ENCODE measurements at regions of chr2 and their contacts with region 1.

Region 1: GRCh38 chr2:216188956-216189355 is 79.8 kb downstream of the XRCC5 start:
- DNase-seq: no peak
- ATAC-seq: no peak
- H3K4me3 Mint-ChIP-seq: no peak overlapping the region
- H3K27ac Mint-ChIP-seq: no peak overlapping the region
- H3K4me1 Mint-ChIP-seq: peaks cover 50% of the 10 kb centered on the region
- H3K27me3 Mint-ChIP-seq: no peaks in the 10 kb centered on the region
- CTCF ChIP-seq: no peak

Region 2: DNA sequence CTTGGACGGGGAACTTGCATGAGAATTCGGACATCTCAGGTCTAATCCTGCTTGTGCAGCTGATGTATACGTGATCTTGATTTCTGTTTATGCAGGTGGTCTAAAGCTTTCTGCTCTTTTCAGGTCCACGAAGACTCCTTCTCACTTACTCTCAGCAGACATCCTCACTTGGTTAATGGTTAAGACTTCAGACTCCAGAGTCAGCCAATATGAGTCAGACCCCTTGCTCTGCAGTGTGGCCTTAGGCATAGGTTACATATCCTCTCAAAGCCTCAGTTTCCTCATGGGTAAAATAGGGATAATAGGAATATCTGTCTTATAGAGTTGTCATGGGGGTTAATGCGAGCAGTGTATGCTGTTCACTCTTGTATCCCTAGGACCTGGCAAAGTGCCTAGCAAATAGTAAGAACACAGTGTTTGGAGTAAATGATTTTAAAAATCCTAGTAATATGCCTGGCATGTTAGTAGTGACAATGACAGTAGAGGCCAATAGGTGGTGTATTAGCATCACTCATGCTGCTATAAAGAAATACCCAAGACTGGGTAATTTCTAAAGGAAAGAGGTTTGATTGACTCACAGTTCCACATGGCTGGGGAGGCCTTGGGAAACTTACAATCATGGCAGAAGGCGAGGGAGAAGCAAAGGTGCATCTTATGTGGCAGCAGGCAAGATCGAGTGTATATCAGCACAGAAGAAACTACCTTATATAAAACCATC is 37.5 kb before region 1 on chr2:
- CTCF ChIA-PET with region 1: no interaction called
- POLR2A ChIA-PET with region 1: no interaction called
- intact Hi-C with region 1: no loop called
- DNase-seq: no peak
- ATAC-seq: no peak
- H3K4me3 Mint-ChIP-seq: no peak overlapping the region
- H3K27ac Mint-ChIP-seq: no peak overlapping the region
- H3K4me1 Mint-ChIP-seq: no peaks in the 10 kb centered on the region
- H3K27me3 Mint-ChIP-seq: no peaks in the 10 kb centered on the region
- CTCF ChIP-seq: no peak

Region 3: DNA sequence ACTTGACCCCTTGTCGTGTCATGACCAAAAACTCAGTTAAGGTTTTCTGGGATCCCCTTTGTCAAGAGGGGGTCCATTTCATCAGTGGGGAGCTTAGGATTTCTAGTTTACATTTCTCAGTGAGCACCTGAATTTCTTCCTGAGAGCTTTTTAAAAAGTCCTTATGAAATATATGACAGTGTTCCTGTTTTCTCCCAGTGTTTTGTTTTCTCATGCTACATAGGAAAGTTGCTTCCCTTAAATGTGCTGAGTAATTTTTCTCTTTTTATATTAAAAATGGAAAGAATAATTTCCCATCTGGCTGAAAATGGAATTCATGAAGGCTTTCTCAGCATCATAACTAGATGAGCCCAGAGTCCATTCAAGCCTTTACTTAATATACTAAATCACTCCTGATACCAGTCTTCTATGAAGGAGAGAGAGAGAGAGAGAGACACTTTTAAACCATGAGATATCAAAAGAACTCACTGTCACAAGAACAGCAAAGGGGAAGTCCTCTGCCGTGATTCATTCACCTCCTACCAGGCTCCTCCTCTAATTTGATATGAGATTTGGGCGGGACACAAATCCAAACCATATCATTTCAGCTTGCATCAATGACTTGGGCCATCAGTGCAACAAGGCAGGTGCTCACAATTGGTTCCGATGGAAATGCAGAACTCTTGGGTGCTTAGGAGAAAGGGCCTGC is 18.7 kb before region 1 on chr2:
- CTCF ChIA-PET with region 1: interaction called, 6 read pairs
- POLR2A ChIA-PET with region 1: no interaction called
- intact Hi-C with region 1: loop called (anchors 2 kb)
- DNase-seq: no peak
- ATAC-seq: peak; percentile 14
- H3K4me3 Mint-ChIP-seq: no peak overlapping the region
- H3K27ac Mint-ChIP-seq: peak overlapping the region; percentile 35
- H3K4me1 Mint-ChIP-seq: no peaks in the 10 kb centered on the region
- H3K27me3 Mint-ChIP-seq: no peaks in the 10 kb centered on the region
- CTCF ChIP-seq: no peak

Region 4: DNA sequence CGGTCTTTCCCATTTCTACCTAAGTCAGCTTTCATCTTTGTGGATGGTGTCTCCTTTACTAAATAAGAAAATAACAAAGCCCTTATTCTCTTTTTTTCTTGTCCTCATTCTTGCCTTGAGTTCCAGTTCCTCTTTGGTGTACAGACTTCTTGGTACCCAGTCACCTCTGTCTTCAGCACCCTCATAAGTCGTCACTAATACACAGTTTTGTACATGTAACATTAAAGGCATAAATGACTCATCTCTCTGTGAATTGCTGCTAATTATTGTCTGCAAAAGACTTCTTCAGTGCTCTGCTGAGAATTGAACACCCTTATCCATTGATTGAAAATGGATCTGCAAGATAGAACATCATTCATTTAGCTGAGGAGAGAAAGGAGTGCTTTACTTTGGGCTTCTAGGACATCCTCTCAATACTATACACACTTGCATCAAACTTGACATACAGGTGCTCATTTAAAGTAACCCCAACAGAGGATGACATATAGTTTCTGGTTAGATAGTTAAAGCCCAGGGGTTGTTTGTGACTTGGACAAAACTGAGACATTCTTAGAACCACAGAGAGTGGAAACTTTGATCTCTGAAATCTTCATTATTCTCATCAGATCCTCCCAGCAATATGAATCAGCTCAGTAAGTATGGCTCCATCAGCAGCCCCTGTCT is 17.2 kb after region 1 on chr2:
- CTCF ChIA-PET with region 1: no interaction called
- POLR2A ChIA-PET with region 1: no interaction called
- intact Hi-C with region 1: loop called (anchors 1 kb)
- DNase-seq: no peak
- ATAC-seq: peak; percentile 78
- H3K4me3 Mint-ChIP-seq: no peak overlapping the region
- H3K27ac Mint-ChIP-seq: peak overlapping the region; percentile 50
- H3K4me1 Mint-ChIP-seq: peaks cover 21% of the 10 kb centered on the region
- H3K27me3 Mint-ChIP-seq: no peaks in the 10 kb centered on the region
- CTCF ChIP-seq: no peak

Region 5: GRCh38 chr2:216562696-216563435 is 373.9 kb after region 1 on chr2:
- CTCF ChIA-PET with region 1: no interaction called
- POLR2A ChIA-PET with region 1: no interaction called
- intact Hi-C with region 1: no loop called
- DNase-seq: no peak
- ATAC-seq: no peak
- H3K4me3 Mint-ChIP-seq: no peak overlapping the region
- H3K27ac Mint-ChIP-seq: no peak overlapping the region
- H3K4me1 Mint-ChIP-seq: no peaks in the 10 kb centered on the region
- H3K27me3 Mint-ChIP-seq: peaks cover 22% of the 10 kb centered on the region
- CTCF ChIP-seq: no peak

Region 6: GRCh38 chr2:216888907-216889622 is 700.1 kb after region 1 on chr2:
- CTCF ChIA-PET with region 1: no interaction called
- POLR2A ChIA-PET with region 1: no interaction called
- intact Hi-C with region 1: no loop called
- DNase-seq: no peak
- ATAC-seq: no peak
- H3K4me3 Mint-ChIP-seq: no peak overlapping the region
- H3K27ac Mint-ChIP-seq: no peak overlapping the region
- H3K4me1 Mint-ChIP-seq: no peaks in the 10 kb centered on the region
- H3K27me3 Mint-ChIP-seq: peaks cover 3% of the 10 kb centered on the region
- CTCF ChIP-seq: no peak

Measured in activated B cell treated with CpG ODN at 0.5 μM for 24 hours (primary cell).